SK-N-SH (cell line): ENCODE measurements at regions of chr15 and their contacts with region 1.

Region 1: DNA sequence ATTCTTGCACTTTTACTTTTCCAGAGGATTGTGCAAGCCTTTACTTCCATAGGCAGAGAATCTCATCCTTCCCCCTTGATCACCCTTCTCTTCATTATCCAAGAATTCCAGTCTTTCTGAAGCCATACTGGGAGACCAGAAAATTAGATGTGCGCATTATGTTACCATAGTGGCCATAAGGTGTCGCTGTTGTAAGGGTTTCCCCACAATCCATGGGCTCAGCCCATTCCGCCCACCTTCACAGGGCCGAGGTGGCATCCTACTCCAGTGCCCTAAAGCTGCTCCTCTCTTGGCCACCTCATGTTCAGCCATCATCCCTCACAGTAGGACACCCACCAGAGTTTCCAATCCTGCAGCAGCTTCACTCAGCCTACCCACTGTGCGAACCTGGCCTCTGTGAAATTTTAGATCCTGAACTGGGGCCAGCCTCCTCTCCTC is 35.0 kb downstream of the CTSH start:
- DNase-seq: peak; percentile 72
- H3K4me3 ChIP-seq: no peak overlapping the region; a peak in 1 of 4 replicates
- H3K27ac ChIP-seq: no peak overlapping the region
- H3K4me1 ChIP-seq: peaks cover 0 to 11% of the 10 kb centered on the region in 2 experiments; a peak in 3 of 4 replicates
- H3K27me3 ChIP-seq: no peaks in the 10 kb centered on the region
- CTCF ChIP-seq: peak; percentile 78
- EP300 ChIP-seq: no peak
- RAD21 ChIP-seq: peak; percentile 78

Region 2: DNA sequence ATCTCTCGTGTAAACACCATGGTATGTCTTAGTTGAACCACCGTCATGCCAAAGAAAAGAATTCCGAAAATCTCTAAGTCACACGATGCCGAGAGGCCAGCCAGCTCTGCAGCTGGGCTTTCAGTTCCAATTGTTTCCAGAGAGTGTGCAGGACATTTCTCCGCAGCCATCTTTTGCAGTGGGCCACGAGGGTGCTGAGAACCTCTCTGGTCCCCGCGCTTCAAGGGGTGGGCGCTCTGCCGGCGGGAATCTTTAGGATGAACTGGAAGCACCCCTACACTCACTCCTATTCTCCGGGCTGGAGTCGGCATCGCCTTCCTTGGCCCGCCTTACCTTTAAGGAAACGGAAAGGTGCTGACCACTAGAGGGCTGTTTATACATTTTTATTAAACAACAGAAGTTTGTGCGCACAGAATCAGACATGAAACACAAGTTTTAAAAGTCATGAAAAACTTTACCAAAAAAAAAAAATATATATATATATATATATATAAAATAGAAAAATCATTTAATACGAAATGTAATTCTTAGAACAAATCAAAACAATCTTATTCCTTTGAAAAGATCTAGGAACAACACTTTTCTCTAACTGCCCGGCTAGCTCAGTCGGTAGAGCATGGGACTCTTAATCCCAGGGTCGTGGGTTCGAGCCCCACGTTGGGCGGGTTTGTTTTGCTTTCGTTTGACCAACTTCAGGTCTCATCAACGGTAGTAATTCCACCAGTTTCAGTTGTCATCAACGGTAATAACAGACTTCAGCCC is 49.7 kb before region 1 on chr15:
- CTCF ChIA-PET with region 1: no interaction called
- POLR2A ChIA-PET with region 1: no interaction called
- DNase-seq: peak; percentile 83
- H3K4me3 ChIP-seq: peak overlapping the region; percentile 53 to 64
- H3K27ac ChIP-seq: peak overlapping the region; percentile 82 to 83
- H3K4me1 ChIP-seq: no peaks in the 10 kb centered on the region; a peak in 1 of 4 replicates
- H3K27me3 ChIP-seq: no peaks in the 10 kb centered on the region
- CTCF ChIP-seq: peak; percentile 63
- EP300 ChIP-seq: no peak; a peak in 1 of 4 replicates
- RAD21 ChIP-seq: peak; percentile 49

Region 3: GRCh38 chr15:78893538-78893937 is 16.3 kb before region 1 on chr15:
- CTCF ChIA-PET with region 1: interaction called, 19 read pairs
- POLR2A ChIA-PET with region 1: no interaction called
- DNase-seq: no peak
- H3K4me3 ChIP-seq: no peak overlapping the region
- H3K27ac ChIP-seq: no peak overlapping the region
- H3K4me1 ChIP-seq: no peaks in the 10 kb centered on the region
- H3K27me3 ChIP-seq: no peaks in the 10 kb centered on the region
- CTCF ChIP-seq: no peak
- EP300 ChIP-seq: no peak
- RAD21 ChIP-seq: no peak

Region 4: DNA sequence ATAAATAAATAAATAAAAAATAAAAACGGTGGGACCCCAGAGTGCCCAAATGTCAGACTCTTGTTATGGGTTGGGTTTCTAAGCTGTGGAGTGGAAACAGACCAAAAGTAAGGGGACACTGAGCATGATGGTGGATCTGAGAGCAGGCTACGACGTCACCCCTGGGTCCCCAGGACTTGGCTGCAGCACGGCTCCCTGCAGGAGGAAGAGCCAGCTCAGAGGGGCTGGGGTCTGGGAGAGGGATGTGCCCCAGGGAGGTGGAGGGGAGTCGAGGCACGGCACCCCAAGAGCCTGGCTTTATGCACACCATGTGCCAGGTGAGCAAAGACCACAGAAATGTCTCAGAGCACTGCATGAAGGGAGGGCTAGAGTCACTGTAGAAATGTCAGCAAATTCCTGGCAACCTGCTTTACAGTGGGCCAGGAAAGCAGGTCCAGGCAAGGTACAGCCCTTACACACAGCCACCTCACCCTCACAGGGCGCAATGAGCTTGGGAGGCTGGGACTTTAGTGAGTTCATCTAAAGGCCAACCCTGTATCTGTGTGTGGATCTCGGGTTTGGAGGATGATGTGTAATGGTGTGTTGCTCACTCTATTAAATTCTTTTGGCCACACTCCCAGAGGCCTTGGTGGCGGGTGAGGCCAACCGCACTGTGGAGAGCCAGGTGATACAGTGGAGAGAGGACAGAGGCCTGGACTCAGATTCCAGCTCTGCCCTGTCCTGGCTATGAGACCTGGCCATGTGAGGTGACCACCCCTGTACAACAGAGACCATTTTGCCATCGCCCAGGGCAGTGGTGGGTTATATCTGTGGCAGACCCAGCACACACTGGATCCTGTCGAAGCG is 21.0 kb after region 1 on chr15:
- CTCF ChIA-PET with region 1: interaction called, 59 read pairs
- POLR2A ChIA-PET with region 1: no interaction called
- DNase-seq: peak; percentile 72
- H3K4me3 ChIP-seq: no peak overlapping the region
- H3K27ac ChIP-seq: peak overlapping the region; percentile 30 to 82
- H3K4me1 ChIP-seq: peaks cover 8 to 31% of the 10 kb centered on the region in 2 experiments; a peak in 3 of 4 replicates
- H3K27me3 ChIP-seq: no peaks in the 10 kb centered on the region
- CTCF ChIP-seq: no peak
- EP300 ChIP-seq: peak; percentile 49 to 57; a peak in 3 of 4 replicates
- RAD21 ChIP-seq: no peak

Region 5: DNA sequence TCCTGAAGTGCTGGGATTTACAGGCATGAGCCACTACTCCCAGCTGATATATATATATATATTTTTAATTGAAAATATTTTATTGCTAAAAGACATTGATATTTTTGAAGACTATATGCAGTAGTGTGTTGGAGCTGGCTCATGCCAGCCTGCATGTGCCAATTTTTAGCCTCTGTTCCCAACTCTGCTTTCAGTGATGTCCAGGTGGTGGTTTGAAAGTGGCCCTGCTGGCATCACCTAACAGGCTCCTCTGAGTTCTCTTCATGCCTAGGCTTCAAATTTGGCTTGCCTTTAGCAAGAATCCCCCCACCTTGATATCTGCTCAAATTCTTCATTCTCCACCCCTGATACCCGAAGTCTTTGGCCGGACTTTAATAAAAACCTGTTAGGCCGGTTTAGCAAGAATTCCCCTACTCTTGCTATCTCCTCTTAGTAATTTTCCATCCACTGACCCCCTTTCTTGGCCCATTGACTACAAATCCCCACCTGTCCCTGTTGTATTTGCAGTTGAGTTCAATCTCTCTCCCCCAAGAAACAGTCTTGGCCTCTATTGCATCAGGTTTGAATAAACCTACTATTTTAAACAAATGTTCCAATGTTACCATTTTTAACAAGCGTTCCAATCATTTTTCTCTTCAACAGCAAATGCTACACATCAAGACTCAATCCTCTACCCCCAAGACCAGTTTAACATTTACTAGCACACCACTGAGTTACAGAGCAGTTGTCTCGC is 58.9 kb after region 1 on chr15:
- CTCF ChIA-PET with region 1: interaction called, 13 read pairs
- POLR2A ChIA-PET with region 1: no interaction called
- DNase-seq: no peak
- H3K4me3 ChIP-seq: no peak overlapping the region
- H3K27ac ChIP-seq: no peak overlapping the region
- H3K4me1 ChIP-seq: no peaks in the 10 kb centered on the region
- H3K27me3 ChIP-seq: no peaks in the 10 kb centered on the region
- CTCF ChIP-seq: no peak
- EP300 ChIP-seq: no peak
- RAD21 ChIP-seq: no peak

Region 6: DNA sequence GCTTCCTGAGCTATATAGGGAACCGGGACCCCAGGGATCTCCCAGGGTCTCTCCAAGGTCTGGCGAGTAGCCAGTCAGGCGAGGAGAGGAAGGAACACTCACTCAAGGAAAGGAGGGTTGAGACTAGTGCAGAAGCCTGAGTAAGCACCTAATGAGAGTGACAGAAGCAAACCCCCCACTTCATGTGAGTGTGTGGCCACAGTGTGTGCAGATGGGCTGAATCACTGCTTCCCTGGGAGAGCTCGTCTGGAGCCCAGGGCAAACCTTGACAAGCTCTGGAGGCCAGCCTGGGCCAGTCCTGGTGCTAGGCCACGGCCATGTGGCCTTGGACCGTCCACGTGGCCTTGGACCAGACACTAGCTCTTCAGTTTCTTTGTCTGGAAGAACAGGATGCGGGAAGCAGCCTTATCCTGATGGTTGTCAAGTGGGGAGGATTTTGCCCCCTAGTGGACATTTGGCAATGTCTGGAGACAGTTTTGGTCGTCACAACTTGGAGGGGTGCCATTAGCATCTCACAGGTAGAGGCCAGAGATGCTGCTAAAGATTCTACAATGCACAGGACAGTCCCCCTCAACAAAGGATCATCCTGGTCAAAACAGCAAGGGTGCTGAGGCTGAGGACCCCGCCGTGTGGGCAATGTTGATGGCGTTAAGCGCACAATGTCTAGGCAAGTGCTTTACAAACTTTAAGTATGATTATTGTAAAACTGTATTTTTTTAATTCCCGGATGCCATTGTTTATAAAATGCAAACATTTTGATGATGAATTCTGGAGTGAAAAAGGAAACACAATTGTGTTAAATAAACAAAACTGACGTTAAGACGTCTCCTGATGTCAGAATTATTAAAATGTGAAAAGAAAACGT is 69.9 kb after region 1 on chr15:
- CTCF ChIA-PET with region 1: interaction called, 79 read pairs
- POLR2A ChIA-PET with region 1: no interaction called
- DNase-seq: peak; percentile 83
- H3K4me3 ChIP-seq: no peak overlapping the region; a peak in 1 of 4 replicates
- H3K27ac ChIP-seq: peak overlapping the region in 1 of 2 experiments; percentile 40; a peak in 1 of 4 replicates
- H3K4me1 ChIP-seq: peaks cover 0 to 6% of the 10 kb centered on the region in 2 experiments; a peak in 1 of 4 replicates
- H3K27me3 ChIP-seq: no peaks in the 10 kb centered on the region
- CTCF ChIP-seq: peak; percentile 75
- EP300 ChIP-seq: no peak
- RAD21 ChIP-seq: peak; percentile 72